Mammary epithelial cell (primary cell): ENCODE measurements at regions of chr6 and their contacts with region 1.

Region 1: DNA sequence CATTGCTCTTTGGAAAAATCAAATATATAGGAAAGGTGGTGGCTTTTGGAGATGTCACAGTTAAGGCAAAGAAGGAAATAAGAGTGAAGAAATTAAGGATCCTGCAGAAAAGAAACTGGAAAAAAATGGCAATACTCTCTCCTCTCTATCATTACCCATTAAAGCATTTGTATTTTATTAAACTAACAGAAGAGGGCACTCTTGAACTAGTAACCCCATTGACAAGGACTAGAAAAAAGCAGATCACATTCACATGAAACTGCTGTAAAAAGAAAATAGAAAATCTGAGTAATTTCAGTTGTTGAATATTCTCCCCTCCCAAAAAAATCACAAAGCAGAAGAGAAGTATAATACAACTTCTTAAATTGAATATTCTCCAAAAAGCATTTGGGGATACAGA is 104.1 kb upstream of the SLC35B3 start:
- DNase-seq: peak; percentile 33
- H3K4me3 ChIP-seq: no peak overlapping the region
- H3K27ac ChIP-seq: no peak overlapping the region
- H3K4me1 ChIP-seq: no peaks in the 10 kb centered on the region
- H3K27me3 ChIP-seq: no peaks in the 10 kb centered on the region
- CTCF ChIP-seq: peak; percentile 24 to 51

Region 2: DNA sequence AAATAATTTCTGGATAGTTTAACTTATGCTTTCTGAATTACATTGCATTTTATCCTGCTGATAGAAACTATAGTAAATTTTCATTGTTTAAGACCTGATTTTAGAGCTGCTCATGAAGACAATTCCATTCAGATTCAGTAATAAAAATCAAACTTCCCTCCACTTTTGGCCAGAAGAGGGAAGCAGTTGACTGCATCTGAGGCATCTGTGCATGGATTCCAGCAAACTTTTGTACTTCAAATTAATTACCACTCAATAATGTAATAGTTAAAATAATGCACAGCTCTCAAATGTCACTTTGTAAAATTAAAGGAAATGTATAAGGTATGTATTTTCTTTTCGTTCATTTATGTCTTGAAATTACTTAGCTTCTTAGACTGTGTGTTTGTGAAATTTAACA is 39.9 kb before region 1 on chr6:
- CTCF ChIA-PET with region 1: no interaction called
- dilution Hi-C with region 1: no loop called
- in situ Hi-C with region 1: no loop called
- intact Hi-C with region 1: no loop called
- DNase-seq: peak; percentile 5
- H3K4me3 ChIP-seq: no peak overlapping the region
- H3K27ac ChIP-seq: no peak overlapping the region
- H3K4me1 ChIP-seq: no peaks in the 10 kb centered on the region
- H3K27me3 ChIP-seq: no peaks in the 10 kb centered on the region
- CTCF ChIP-seq: peak; percentile 46 to 66

Region 3: DNA sequence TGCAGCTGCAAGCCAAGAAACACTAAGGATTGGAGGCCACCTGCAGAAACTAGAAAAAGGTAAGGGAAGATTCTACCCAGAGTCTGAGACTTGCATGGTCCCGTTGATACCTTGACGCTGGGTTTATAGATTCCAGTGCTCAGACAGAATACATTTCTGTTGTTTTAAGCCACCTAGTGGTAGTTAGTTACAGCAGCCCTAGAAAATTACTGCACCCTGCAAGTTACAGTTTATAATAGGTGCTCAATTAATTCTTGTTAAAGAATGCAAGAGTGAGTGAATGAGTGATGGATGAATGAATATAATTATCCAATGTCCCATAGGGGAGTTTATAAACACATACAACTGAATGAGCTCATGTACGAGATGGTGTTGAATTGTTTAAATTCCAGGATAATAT is 349.0 kb after region 1 on chr6:
- CTCF ChIA-PET with region 1: no interaction called
- dilution Hi-C with region 1: no loop called
- in situ Hi-C with region 1: no loop called
- intact Hi-C with region 1: loop called (anchors 1 kb)
- DNase-seq: no peak
- H3K4me3 ChIP-seq: no peak overlapping the region
- H3K27ac ChIP-seq: no peak overlapping the region
- H3K4me1 ChIP-seq: no peaks in the 10 kb centered on the region
- H3K27me3 ChIP-seq: peaks cover 3% of the 10 kb centered on the region
- CTCF ChIP-seq: peak; percentile 41 to 42